ENCODE measurements at regions of chr2 and their contacts with region 1.

Region 1: GRCh38 chr2:96116879-96117697 is 717 bp upstream of the ADRA2B start:
- DNase-seq: peak in 13 of 14 experiments; percentile 37 to 86 (median 55)
- ATAC-seq: peak; percentile 75
- H3K4me3 ChIP-seq: peak overlapping the region; percentile 21
- H3K4me3 Mint-ChIP-seq: peak overlapping the region; percentile 77
- H3K27ac ChIP-seq: no peak overlapping the region
- H3K27ac Mint-ChIP-seq: no peak overlapping the region
- H3K4me1 ChIP-seq: peaks cover 18% of the 10 kb centered on the region
- H3K4me1 Mint-ChIP-seq: peaks cover 10% of the 10 kb centered on the region
- H3K27me3 ChIP-seq: peaks cover 15 to 22% of the 10 kb centered on the region in 2 experiments
- H3K27me3 Mint-ChIP-seq: peaks cover 31% of the 10 kb centered on the region
- CTCF ChIP-seq: peak; percentile 61

Region 2: GRCh38 chr2:96024336-96025193 is 92.5 kb before region 1 on chr2:
- CTCF ChIA-PET with region 1: interaction called, 4 read pairs
- POLR2A ChIA-PET with region 1: interaction called, 3 read pairs
- intact Hi-C with region 1: loop called (anchors 10 kb)
- DNase-seq: peak in 1 of 14 experiments; percentile 11
- ATAC-seq: no peak
- H3K4me3 ChIP-seq: no peak overlapping the region
- H3K4me3 Mint-ChIP-seq: no peak overlapping the region
- H3K27ac ChIP-seq: no peak overlapping the region
- H3K27ac Mint-ChIP-seq: no peak overlapping the region
- H3K4me1 ChIP-seq: peaks cover 3% of the 10 kb centered on the region
- H3K4me1 Mint-ChIP-seq: peaks cover 3% of the 10 kb centered on the region
- H3K27me3 ChIP-seq: no peaks in the 10 kb centered on the region
- H3K27me3 Mint-ChIP-seq: no peaks in the 10 kb centered on the region
- CTCF ChIP-seq: no peak

Region 3: GRCh38 chr2:96097951-96098823 is 18.9 kb before region 1 on chr2:
- CTCF ChIA-PET with region 1: no interaction called
- POLR2A ChIA-PET with region 1: no interaction called
- intact Hi-C with region 1: no loop called
- DNase-seq: peak in 2 of 14 experiments; percentile 6 to 13
- ATAC-seq: no peak
- H3K4me3 ChIP-seq: no peak overlapping the region
- H3K4me3 Mint-ChIP-seq: no peak overlapping the region
- H3K27ac ChIP-seq: no peak overlapping the region
- H3K27ac Mint-ChIP-seq: no peak overlapping the region
- H3K4me1 ChIP-seq: no peaks in the 10 kb centered on the region
- H3K4me1 Mint-ChIP-seq: no peaks in the 10 kb centered on the region
- H3K27me3 ChIP-seq: no peaks in the 10 kb centered on the region
- H3K27me3 Mint-ChIP-seq: no peaks in the 10 kb centered on the region
- CTCF ChIP-seq: no peak

Region 4: DNA sequence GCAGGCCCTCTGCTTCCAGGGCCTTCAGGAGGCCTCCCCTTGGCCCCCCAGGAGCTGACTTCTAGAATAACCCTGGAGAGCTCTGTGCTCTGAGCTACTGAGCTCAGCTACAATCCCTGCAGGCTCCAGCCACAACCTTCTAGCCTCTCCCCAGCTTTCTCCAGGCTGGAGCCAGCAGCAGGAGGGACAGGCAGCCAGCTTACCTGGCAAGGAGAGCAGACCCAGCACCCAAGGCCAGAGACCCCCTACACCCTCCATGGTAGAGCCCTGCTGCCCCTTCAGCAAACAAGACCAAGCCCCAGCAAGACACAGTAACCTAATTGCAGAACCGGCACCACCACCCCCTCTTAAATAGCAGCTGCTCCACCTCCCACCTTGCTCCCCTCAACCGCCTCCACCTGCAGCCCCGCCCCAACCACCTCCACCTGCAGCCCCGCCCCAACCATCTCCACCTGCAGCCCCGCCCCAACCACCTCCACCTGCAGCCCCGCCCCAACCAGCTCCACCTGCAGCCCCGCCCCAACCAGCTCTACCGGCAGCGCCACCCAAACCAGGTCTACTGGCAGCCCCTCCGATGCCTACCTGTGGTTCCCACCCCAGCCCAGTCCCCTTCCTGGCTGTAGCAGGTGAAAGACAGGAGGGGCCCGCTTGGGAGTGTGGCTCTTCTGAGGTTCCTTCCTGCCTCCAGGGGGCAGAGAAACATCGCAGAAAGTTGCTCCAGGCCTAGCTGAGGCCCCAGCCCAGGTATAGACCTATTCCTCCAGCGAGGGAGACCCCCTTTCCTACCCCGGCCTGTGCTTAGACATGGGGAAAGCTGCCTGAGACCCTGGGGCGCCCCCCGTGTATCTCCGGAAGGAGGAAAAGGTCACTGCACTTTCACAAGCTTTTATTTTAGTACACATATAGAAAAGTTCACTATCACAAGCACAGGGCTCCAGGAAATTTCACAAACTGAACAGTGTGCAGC is 21.4 kb after region 1 on chr2 and contains the start of gene ASTL:
- CTCF ChIA-PET with region 1: interaction called, 13 read pairs
- POLR2A ChIA-PET with region 1: interaction called, 4 read pairs
- intact Hi-C with region 1: no loop called
- DNase-seq: peak; percentile 57 to 86 (median 64)
- ATAC-seq: peak; percentile 42
- H3K4me3 ChIP-seq: no peak within 1 kb of the TSS
- H3K4me3 Mint-ChIP-seq: peak within 1 kb of the TSS; percentile 39
- H3K27ac ChIP-seq: no peak within 1 kb of the TSS
- H3K27ac Mint-ChIP-seq: peak within 1 kb of the TSS; percentile 71
- H3K4me1 ChIP-seq: peaks cover 27% of the 10 kb centered on the region
- H3K4me1 Mint-ChIP-seq: peaks cover 32% of the 10 kb centered on the region
- H3K27me3 ChIP-seq: no peaks in the 10 kb centered on the region
- H3K27me3 Mint-ChIP-seq: no peaks in the 10 kb centered on the region
- CTCF ChIP-seq: peak; percentile 75
- total RNA-seq, gene ASTL: 5.0 to 6.5 TPM